ENCODE measurements at regions of chr6 and their contacts with region 1.

Region 1: DNA sequence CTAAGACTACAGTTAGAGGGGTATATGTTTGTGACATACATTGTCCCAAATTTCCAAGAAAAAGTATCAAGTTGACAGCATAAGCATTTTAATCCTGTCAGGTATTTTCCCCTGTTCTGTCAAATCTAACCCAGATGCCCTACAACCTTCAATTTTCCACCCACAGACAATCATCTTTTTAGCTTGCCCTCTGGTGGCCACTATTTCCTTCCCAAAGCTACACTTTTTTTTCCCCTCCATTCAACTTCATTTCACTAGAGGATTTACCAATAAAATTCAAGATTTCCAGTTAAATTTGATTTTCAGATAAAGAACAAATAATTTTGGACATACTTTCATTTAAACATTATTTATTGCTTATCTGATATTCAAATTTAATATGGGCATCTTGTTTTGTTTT is 286.6 kb downstream of the TENT5A start:
- DNase-seq: peak; percentile 37
- ATAC-seq: peak; percentile 50
- H3K4me3 ChIP-seq: no peak overlapping the region
- H3K27ac ChIP-seq: no peak overlapping the region
- H3K4me1 ChIP-seq: no peaks in the 10 kb centered on the region
- H3K27me3 ChIP-seq: no peaks in the 10 kb centered on the region
- CTCF ChIP-seq: peak; percentile 60 to 72 (median 68); a peak in 5 of 6 replicates
- POLR2A ChIP-seq: no peak
- RAD21 ChIP-seq: peak; percentile 66

Region 2: GRCh38 chr6:80622641-80623040 is 843.2 kb before region 1 on chr6:
- CTCF ChIA-PET with region 1: no interaction called
- POLR2A ChIA-PET with region 1: no interaction called
- RAD21 ChIA-PET with region 1: no interaction called
- intact Hi-C with region 1: no loop called
- DNase-seq: no peak
- ATAC-seq: no peak
- H3K4me3 ChIP-seq: no peak overlapping the region
- H3K27ac ChIP-seq: no peak overlapping the region
- H3K4me1 ChIP-seq: no peaks in the 10 kb centered on the region
- H3K27me3 ChIP-seq: no peaks in the 10 kb centered on the region
- CTCF ChIP-seq: no peak
- POLR2A ChIP-seq: no peak
- RAD21 ChIP-seq: no peak

Region 3: DNA sequence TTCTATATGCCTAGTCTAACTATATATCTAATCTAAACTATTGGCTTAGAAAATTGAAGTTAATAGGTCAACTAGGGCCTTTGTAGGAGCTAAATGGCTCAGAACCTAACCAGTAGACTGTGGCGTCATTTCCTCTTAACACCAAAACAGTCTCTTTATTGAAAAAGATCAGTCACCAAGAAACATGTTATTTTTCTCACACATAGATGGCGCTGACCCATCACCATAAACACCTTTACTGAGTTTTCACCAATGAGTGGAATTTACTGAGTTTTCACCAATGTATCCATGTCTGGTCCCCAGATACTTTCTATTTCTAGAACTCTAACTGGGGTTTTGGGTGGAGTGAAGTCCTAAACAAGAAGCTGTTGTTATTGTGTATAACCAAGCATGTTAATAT is 723.4 kb before region 1 on chr6:
- CTCF ChIA-PET with region 1: interaction called, 3 read pairs
- POLR2A ChIA-PET with region 1: no interaction called
- RAD21 ChIA-PET with region 1: no interaction called
- intact Hi-C with region 1: loop called (anchors 5 kb)
- DNase-seq: peak; percentile 35
- ATAC-seq: peak; percentile 71
- H3K4me3 ChIP-seq: no peak overlapping the region
- H3K27ac ChIP-seq: no peak overlapping the region
- H3K4me1 ChIP-seq: no peaks in the 10 kb centered on the region
- H3K27me3 ChIP-seq: no peaks in the 10 kb centered on the region
- CTCF ChIP-seq: peak; percentile 30 to 63 (median 46); a peak in 5 of 6 replicates
- POLR2A ChIP-seq: no peak
- RAD21 ChIP-seq: peak; percentile 74

Region 4: GRCh38 chr6:81241126-81242041 is 224.5 kb before region 1 on chr6:
- CTCF ChIA-PET with region 1: interaction called, 4 read pairs
- POLR2A ChIA-PET with region 1: no interaction called
- RAD21 ChIA-PET with region 1: no interaction called
- intact Hi-C with region 1: loop called (anchors 5 kb)
- DNase-seq: peak; percentile 27
- ATAC-seq: no peak
- H3K4me3 ChIP-seq: no peak overlapping the region
- H3K27ac ChIP-seq: no peak overlapping the region
- H3K4me1 ChIP-seq: no peaks in the 10 kb centered on the region
- H3K27me3 ChIP-seq: no peaks in the 10 kb centered on the region
- CTCF ChIP-seq: peak; percentile 37 to 56 (median 54); a peak in 5 of 6 replicates
- POLR2A ChIP-seq: no peak
- RAD21 ChIP-seq: peak; percentile 66

Measured in HCT116 (cell line).